BJ (cell line): ENCODE measurements at regions of chr2 and their contacts with region 1.

Region 1: GRCh38 chr2:11129598-11130449 is 25.4 kb upstream of the SLC66A3 start:
- DNase-seq: no peak
- H3K4me3 ChIP-seq: peak overlapping the region; percentile 37
- H3K27me3 ChIP-seq: no peaks in the 10 kb centered on the region
- CTCF ChIP-seq: peak; percentile 27; the same call in 1 of the 2 replicates

Region 2: DNA sequence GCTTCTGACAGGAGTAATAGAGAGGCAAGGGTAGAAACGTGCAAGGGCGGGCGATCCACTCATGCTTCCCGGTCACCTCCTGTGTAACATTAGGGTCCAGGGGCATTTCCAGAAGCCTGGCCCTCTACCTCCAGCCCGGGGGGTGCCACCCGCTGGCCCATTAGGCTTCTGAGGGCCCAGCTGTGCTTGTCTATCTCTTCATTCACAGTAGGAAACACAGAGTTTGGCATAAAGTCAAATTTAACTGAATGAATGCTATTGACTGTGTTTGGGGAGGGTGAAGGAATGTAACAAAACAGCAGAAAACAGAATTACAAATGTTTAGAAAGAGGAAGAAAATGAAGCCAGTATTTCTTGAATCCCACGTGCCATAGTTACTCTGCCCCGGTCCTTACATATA is 87.0 kb before region 1 on chr2:
- CTCF ChIA-PET with region 1: no interaction called
- POLR2A ChIA-PET with region 1: no interaction called
- DNase-seq: no peak
- H3K4me3 ChIP-seq: no peak overlapping the region
- H3K27me3 ChIP-seq: peaks cover 6% of the 10 kb centered on the region
- CTCF ChIP-seq: no peak

Region 3: DNA sequence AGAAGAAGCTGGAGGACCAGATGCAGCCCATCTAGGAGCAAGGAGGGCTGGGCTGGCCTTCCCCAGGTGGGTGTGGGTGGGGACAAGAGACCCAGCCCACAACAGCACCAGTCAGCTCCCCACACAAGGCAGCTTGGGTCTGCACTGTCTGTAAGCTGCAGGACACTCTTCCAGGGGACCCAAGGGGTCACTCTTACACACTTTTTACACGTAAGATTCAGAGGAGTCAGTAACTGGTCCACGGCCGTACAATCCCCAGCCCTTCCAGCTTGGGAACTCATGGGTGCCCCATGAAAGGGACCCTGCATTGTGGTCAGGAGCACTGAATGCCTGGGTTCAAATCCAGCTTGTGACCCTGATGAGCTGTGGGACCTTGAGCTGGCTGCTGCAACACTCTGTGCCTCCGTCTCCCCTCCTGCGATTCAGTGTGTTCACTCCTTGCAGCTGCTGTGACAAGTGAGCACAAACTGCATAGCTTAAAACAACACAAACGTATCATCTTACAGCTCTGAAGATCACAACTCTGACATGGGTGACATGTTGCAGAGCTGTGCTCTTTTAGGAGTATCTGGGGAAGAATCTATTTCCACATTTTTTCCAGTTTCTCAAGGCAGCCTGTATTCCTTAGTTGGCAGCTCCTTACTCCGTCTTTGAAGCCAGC is 14.4 kb after region 1 on chr2:
- CTCF ChIA-PET with region 1: interaction called, 12 read pairs
- POLR2A ChIA-PET with region 1: no interaction called
- DNase-seq: no peak
- H3K4me3 ChIP-seq: no peak overlapping the region
- H3K27me3 ChIP-seq: peaks cover 6% of the 10 kb centered on the region
- CTCF ChIP-seq: no peak

Region 4: GRCh38 chr2:11228692-11229091 is 98.9 kb after region 1 on chr2:
- CTCF ChIA-PET with region 1: interaction called, 13 read pairs
- POLR2A ChIA-PET with region 1: no interaction called
- DNase-seq: no peak
- H3K4me3 ChIP-seq: no peak overlapping the region
- H3K27me3 ChIP-seq: no peaks in the 10 kb centered on the region
- CTCF ChIP-seq: no peak

Region 5: GRCh38 chr2:11435036-11435435 is 305.2 kb after region 1 on chr2:
- CTCF ChIA-PET with region 1: interaction called, 10 read pairs
- POLR2A ChIA-PET with region 1: no interaction called
- DNase-seq: no peak
- H3K4me3 ChIP-seq: no peak overlapping the region
- H3K27me3 ChIP-seq: no peaks in the 10 kb centered on the region
- CTCF ChIP-seq: no peak

Region 6: GRCh38 chr2:11457935-11458334 is 328.1 kb after region 1 on chr2:
- CTCF ChIA-PET with region 1: interaction called, 27 read pairs
- POLR2A ChIA-PET with region 1: no interaction called
- DNase-seq: no peak
- H3K4me3 ChIP-seq: no peak overlapping the region
- H3K27me3 ChIP-seq: no peaks in the 10 kb centered on the region
- CTCF ChIP-seq: no peak

Region 7: DNA sequence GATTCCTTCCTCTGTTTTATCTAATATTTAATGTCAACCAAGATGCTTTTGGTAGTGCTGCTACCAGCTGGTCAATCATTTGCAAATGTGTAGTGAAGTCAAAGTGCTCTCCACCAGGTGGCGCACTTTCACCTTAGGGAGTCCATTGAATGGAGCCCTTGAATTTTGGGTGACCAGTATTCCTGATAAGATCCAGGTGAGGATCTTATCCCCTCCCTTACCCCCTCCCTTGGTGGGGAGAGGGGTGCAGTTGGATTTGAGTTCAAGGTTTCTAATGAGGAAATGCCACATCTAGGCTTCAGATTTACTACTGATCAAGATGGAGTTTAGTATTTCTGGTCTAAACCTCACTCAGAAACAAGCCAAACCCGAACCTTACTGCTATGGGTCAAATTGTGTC is 348.2 kb after region 1 on chr2:
- CTCF ChIA-PET with region 1: interaction called, 11 read pairs
- POLR2A ChIA-PET with region 1: no interaction called
- DNase-seq: peak; percentile 16
- H3K4me3 ChIP-seq: no peak overlapping the region
- H3K27me3 ChIP-seq: peaks cover 25% of the 10 kb centered on the region
- CTCF ChIP-seq: peak; percentile 85

Region 8: DNA sequence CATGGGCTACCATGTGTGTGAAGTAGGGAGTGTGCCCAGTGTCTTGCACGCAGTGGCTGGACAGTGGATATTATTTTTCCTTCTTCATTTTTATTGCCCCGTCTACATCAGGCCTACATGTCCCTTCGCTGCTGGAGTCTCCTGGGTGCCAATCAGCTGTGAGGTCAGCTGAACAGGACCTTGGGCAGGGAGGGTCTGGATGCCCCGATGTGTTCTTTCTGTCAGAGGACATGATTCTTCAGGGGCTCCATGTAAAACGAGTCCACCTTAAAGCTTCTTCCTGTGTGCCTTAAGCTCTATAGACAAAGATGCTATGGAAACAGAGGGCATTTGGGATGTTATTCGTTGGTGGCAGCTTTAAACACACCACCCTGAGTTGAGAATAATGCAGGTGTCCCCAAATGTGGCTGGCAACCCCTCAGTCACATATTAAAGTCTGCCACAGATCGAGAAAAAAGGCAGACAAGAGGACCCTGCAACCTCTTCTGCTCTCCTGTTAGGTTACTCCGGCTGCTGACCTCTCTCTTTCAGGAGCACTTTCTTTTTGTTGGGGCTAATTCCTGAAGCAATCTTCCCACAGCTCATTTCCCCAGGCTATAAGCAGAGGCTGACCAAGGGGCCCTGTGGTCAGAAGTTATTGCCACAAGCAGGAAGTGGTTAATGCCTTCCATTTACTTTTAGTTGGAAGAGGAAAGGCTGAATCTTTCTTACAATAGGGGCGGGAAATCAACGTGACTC is 424.0 kb after region 1 on chr2:
- CTCF ChIA-PET with region 1: no interaction called
- POLR2A ChIA-PET with region 1: no interaction called
- DNase-seq: no peak
- H3K4me3 ChIP-seq: no peak overlapping the region
- H3K27me3 ChIP-seq: peaks cover 17% of the 10 kb centered on the region
- CTCF ChIP-seq: no peak

Region 9: GRCh38 chr2:11573418-11574175 is 443.8 kb after region 1 on chr2:
- CTCF ChIA-PET with region 1: no interaction called
- POLR2A ChIA-PET with region 1: no interaction called
- DNase-seq: no peak
- H3K4me3 ChIP-seq: no peak overlapping the region
- H3K27me3 ChIP-seq: peaks cover 9% of the 10 kb centered on the region
- CTCF ChIP-seq: no peak